ENCODE measurements at regions of chr19 and their contacts with region 1.

Region 1: GRCh38 chr19:21141787-21142464 is at the start of gene ZNF431:
- DNase-seq: peak; percentile 73
- ATAC-seq: peak; percentile 99
- H3K4me3 Mint-ChIP-seq: peak within 1 kb of the TSS; percentile 100
- H3K27ac Mint-ChIP-seq: peak within 1 kb of the TSS; percentile 98
- H3K4me1 Mint-ChIP-seq: peaks cover 32% of the 10 kb centered on the region
- H3K27me3 Mint-ChIP-seq: no peaks in the 10 kb centered on the region
- CTCF ChIP-seq: no peak
- total RNA-seq, gene ZNF431: 33.2 and 34.9 TPM in 2 replicates

Region 2: DNA sequence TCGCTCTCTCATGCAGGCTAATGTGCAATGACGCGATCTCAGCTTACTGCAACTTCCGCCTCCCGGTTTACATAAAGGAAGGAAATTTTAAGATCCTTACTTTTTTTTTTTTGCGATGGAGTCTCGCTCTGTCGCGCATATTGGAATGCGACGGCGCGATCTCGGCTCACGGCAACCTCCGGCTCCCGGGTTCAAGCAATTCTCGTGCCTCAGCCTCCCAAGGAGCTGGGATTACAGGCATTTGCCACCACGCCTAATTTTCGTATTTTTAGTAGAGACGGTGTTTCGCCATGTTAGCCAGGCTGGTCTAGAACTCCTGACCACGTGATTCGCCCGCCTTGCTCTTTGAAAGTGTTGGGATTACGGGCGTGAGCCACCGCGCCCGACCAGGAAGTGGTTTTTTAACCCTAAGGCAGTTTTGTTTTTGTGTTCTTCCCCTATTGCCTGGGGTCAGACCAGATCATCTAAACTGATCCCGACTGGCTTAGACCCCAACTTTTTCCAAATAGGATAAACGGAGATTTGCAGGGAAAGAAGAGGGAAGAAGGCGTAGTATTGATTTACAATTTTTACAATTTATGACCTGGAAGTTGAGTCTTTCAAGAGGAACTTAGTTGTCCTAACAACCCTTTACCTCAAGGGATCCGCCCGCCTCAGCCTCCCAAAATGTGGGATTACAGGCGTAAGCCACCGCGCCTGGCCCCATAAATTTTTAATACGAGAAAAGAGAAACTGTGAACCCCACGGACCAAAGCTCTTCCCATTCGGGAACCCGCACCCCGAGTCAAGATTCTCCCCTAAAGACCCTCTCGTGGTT is 718.3 kb before region 1 on chr19:
- CTCF ChIA-PET with region 1: no interaction called
- POLR2A ChIA-PET with region 1: interaction called, 3 read pairs
- intact Hi-C with region 1: loop called (anchors 10 kb)
- DNase-seq: peak; percentile 24
- ATAC-seq: no peak
- H3K4me3 Mint-ChIP-seq: peak overlapping the region; percentile 99
- H3K27ac Mint-ChIP-seq: peak overlapping the region; percentile 98
- H3K4me1 Mint-ChIP-seq: peaks cover 15% of the 10 kb centered on the region
- H3K27me3 Mint-ChIP-seq: no peaks in the 10 kb centered on the region
- CTCF ChIP-seq: no peak

Region 3: DNA sequence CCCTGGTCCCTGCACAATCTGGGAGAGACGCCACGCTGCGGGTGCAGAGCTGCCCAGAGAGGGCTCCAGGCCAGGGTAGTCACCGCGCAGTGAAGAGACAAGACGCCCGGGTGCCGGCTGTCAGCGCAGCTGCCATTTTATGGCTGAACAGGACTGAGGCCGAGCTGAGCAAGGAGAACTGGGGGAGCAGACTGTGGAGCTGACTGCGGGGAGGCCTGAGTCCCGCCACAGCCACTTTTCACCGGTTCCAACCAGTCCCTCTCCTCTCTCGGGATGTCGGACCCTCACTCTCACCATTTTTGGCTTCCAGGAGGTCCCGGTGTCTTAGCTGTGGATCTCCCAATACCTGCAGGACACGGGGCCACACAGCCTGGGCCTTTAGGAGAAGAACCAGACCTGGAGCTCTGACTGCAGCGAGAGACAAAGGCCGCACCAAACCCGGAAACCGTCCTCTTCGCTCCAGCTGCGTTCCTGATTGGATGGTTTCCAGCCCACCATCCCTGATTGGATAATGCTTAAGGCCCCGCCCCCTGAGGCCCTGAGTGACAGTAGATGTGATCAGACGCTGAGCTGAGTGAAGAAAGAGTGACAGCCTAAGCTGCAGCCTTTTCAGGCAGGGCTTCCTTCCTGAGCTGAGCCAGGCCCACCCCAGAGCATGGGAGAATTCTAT is 480.6 kb before region 1 on chr19 and contains the start of gene ZNF626:
- CTCF ChIA-PET with region 1: no interaction called
- POLR2A ChIA-PET with region 1: interaction called, 10 read pairs
- intact Hi-C with region 1: loop called (anchors 2 kb)
- DNase-seq: peak; percentile 80
- ATAC-seq: peak; percentile 98
- H3K4me3 Mint-ChIP-seq: peak within 1 kb of the TSS; percentile 95
- H3K27ac Mint-ChIP-seq: peak within 1 kb of the TSS; percentile 95
- H3K4me1 Mint-ChIP-seq: peaks cover 49% of the 10 kb centered on the region
- H3K27me3 Mint-ChIP-seq: no peaks in the 10 kb centered on the region
- CTCF ChIP-seq: no peak
- total RNA-seq, gene ZNF626: 16.1 and 17.2 TPM in 2 replicates

Region 4: DNA sequence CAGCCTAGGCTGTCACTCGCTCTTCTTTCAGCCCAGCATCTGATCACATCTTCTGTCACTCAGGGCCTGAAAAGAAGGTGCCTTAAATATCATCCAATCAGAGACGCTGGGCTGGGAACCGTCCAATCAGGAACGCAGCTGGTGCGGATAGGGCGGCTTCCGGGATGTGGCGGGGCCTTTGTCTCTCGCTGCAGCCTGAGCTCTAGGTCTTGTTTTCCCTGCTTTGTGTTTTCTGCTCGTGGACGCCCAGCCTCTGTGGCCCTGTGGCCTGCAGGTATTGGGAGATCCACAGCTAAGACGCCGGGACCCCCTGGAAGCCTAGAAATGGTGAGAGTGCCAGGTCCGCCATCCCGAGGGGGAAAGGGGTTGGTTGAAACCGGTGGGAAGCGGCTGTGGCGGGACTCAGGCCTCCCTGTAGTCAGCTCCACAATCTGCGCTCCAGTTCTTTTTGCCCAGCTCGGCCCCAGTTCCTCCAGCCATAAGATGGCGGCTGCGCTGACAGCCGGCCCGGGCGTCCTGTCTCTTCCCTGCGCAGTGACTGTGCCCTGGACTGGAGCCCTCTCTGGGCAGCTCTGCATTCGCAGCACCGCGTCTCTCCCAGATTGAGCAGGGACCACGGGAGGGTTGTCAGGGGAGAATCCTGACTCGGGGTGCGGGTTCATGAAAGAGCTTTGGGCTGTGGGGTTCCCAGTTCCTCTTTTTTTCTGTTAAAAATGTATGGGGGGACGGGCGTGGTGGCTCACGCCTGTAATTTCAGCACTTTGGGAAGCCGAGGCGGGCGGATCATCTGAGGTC is 218.7 kb before region 1 on chr19 and contains the start of gene ZNF85:
- CTCF ChIA-PET with region 1: no interaction called
- POLR2A ChIA-PET with region 1: interaction called, 10 read pairs
- intact Hi-C with region 1: loop called (anchors 1 kb)
- DNase-seq: peak; percentile 76
- ATAC-seq: peak; percentile 97
- H3K4me3 Mint-ChIP-seq: peak within 1 kb of the TSS; percentile 98
- H3K27ac Mint-ChIP-seq: peak within 1 kb of the TSS; percentile 96
- H3K4me1 Mint-ChIP-seq: peaks cover 13% of the 10 kb centered on the region
- H3K27me3 Mint-ChIP-seq: no peaks in the 10 kb centered on the region
- CTCF ChIP-seq: no peak
- total RNA-seq, gene ZNF85: 15.0 and 18.1 TPM in 2 replicates

Region 5: DNA sequence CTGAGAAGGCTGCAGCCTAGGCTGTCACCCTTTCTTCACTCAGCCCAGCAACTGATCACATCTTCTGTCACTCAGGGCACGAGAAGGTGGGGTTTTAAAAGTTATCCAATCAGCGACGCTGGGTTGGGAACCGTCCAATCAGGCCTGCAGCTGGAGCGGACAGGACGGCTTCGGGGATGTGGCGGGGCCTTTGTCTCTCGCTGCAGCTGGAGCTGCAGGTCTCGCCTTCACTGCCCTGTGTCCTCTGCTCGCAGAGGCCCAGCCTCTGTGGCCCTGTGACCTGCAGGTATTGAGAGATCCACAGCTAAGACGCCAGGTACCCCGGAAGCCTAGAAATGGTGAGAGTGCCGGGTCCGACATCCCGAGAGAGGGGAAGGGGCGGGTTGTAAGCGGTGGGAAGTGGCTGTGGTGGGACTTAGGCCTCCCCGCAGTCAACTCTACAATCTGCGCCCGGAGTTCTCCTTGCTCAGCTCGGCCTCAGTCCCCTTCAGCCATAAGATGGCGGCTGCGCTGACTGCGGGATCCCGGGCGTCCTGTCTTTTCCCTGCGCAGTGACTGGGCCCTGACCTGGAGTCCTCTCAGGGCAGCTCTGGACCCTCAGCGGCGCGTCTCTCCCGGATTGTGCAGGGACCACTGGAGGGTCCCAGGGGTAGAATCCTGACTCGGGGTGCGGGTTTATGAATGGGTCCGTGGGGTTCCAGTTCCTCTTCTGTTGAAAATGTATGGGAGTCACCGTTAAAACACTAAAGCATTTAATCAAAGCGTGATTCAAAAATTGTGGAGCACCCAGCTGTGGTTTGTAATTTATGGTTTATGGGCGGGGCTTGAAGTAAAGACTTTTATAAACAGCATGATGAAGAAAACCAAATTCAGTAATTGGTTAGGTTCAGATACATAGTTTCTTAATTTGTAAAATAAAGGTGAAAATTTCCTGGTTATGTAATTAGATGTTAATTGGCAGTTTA is 59.6 kb before region 1 on chr19 and contains the start of gene ZNF714:
- CTCF ChIA-PET with region 1: no interaction called
- POLR2A ChIA-PET with region 1: interaction called, 13 read pairs
- intact Hi-C with region 1: loop called (anchors 2 kb)
- DNase-seq: peak; percentile 63
- ATAC-seq: peak; percentile 100
- H3K4me3 Mint-ChIP-seq: peak within 1 kb of the TSS; percentile 100
- H3K27ac Mint-ChIP-seq: peak within 1 kb of the TSS; percentile 93
- H3K4me1 Mint-ChIP-seq: peaks cover 13% of the 10 kb centered on the region
- H3K27me3 Mint-ChIP-seq: no peaks in the 10 kb centered on the region
- CTCF ChIP-seq: no peak
- total RNA-seq, gene ZNF714: 11.1 and 12.5 TPM in 2 replicates

Region 6: DNA sequence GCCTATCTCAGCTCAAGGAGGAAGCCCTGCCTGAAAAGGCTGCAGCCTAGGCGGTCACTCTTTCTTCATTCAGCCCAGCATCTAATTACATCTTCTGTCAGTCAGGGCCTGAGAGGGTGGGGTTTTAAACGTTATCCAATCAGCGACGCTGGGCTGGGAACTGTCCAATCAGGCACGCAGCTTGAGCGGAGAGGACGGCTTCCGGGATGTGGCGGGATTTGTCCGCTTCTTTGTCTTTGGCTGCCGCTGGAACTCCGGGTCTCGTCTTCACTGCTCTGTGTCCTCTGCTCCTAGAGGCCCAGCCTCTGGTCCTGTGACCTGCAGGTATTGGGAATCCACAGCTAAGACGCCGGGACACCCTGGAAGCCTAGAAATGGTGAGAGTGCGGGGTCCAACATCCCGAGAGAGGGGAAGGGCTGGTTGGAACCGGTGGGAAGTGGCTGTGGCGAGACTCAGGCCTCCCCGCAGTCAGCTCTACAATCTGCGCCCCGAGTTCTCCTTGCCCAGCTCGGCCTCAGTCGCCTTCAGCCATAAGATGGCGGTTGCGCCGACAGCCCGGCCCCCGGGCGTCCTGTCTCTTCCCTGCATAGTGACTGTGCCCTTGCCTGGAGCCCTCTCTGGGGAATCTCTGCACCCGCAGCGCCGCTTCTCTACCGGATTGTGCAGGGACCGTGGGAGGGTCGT is 217.0 kb after region 1 on chr19 and contains the start of gene ZNF738:
- CTCF ChIA-PET with region 1: no interaction called
- POLR2A ChIA-PET with region 1: no interaction called
- intact Hi-C with region 1: loop called (anchors 2 kb)
- DNase-seq: peak; percentile 70
- ATAC-seq: peak; percentile 96
- H3K4me3 Mint-ChIP-seq: peak within 1 kb of the TSS; percentile 100
- H3K27ac Mint-ChIP-seq: peak within 1 kb of the TSS; percentile 96
- H3K4me1 Mint-ChIP-seq: peaks cover 13% of the 10 kb centered on the region
- H3K27me3 Mint-ChIP-seq: no peaks in the 10 kb centered on the region
- CTCF ChIP-seq: no peak
- total RNA-seq, gene ZNF738: 18.7 and 22.2 TPM in 2 replicates

Region 7: GRCh38 chr19:21767065-21767800 is 625.3 kb after region 1 on chr19 and contains the start of gene ZNF100:
- CTCF ChIA-PET with region 1: no interaction called
- POLR2A ChIA-PET with region 1: interaction called, 4 read pairs
- intact Hi-C with region 1: loop called (anchors 5 kb)
- DNase-seq: peak; percentile 70
- ATAC-seq: peak; percentile 98
- H3K4me3 Mint-ChIP-seq: peak within 1 kb of the TSS; percentile 95
- H3K27ac Mint-ChIP-seq: peak within 1 kb of the TSS; percentile 88
- H3K4me1 Mint-ChIP-seq: peaks cover 18% of the 10 kb centered on the region
- H3K27me3 Mint-ChIP-seq: no peaks in the 10 kb centered on the region
- CTCF ChIP-seq: no peak
- total RNA-seq, gene ZNF100: 21.1 and 22.4 TPM in 2 replicates